ENCODE measurements at regions of chr12 and their contacts with region 1.

Region 1: DNA sequence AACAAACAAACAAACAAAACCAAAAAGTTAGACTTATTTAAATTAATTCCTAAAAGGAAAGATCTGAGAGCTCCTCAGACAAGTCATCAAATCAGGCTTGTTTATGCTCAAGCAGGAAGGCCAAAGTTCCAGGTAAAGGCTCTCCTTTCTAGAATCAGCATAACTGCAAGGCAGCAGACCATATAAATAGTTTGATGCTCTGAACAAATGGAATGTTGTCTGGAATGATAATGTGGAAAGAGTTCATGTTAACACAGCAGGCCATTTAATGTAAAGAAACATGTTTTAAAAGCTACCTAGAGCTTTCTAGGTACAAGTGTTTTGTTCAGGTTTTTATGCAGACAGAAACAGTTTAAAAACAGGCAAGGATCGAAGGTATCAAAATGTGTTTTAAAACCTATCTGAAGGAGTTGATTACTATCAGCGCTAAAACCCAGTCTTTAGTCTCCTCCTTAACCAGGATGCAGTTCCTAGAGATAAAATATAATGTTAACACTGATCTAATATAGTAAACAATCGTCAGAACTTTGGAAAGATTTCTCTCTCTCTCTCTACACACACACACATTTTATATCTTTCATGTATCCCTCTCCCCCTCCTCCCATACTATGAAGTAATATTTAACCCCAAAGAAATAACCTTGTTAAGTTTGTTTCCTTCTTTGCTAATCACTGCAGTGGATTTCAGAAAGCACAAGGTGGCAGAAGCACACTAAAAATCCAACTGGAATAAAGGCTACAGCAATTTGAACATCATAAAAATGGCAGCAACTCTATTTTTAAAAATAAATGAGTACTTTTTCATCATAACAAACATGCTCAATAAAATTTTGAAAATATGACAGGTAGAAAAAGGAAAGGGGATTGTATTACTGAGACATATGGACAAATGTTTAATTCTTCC is 135.5 kb downstream of the PAWR start:
- DNase-seq: no peak
- H3K4me3 ChIP-seq: no peak overlapping the region
- H3K27ac ChIP-seq: peak overlapping the region; percentile 4 to 39
- H3K4me1 ChIP-seq: peaks cover 0 to 6% of the 10 kb centered on the region in 2 donors
- H3K27me3 ChIP-seq: no peaks in the 10 kb centered on the region
- CTCF ChIP-seq: peak in 2 of 3 donors; percentile 50 to 77
- POLR2A ChIP-seq: no peak

Region 2: DNA sequence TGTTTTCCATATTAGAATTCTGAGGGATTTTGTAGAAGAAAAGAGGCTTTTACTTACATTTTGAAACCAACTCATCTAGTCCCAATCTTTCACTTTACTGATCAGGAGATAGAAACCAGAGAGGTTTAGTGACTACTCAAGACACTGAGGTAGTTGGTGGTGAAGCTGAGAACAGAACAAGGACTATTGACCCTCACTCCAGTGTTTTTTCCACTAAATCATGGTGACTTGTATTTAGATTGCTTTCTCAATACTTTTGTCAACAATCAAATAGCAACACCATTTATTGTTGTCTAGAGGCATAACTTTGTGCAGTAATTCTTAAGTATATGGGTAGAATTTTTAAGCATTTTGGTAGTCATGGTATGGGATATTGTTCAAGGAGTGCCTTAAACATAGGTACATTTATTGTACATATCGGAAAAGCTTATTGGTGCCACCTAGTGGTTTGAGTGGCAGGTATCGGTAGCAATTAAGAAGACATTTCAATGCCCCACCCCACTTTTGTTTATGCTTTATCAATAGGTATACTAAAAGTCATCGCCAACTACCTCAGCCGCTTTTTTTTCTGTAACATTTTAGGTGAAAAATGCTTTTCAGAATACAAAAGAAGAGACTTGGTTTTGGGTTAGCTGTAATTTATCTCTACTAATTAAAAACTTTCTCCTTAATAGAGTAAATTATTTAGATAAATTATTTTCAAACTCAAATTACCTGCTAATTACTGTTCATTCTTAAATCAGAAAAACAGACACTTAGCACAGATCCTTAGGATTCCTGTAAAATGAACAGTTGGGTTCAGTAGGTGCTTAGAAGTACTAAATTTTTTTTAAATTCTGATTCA is 182.8 kb after region 1 on chr12:
- intact Hi-C with region 1: loop called (anchors 5 kb)
- DNase-seq: no peak
- H3K4me3 ChIP-seq: no peak overlapping the region
- H3K27ac ChIP-seq: no peak overlapping the region
- H3K4me1 ChIP-seq: no peaks in the 10 kb centered on the region
- H3K27me3 ChIP-seq: no peaks in the 10 kb centered on the region
- CTCF ChIP-seq: peak; percentile 33 to 68 (median 65)
- POLR2A ChIP-seq: no peak

Measured in breast epithelium (tissue), 4 donors.